Thyroid gland (tissue), 4 donors: ENCODE measurements at regions of chr6 and their contacts with region 1.

Region 1: GRCh38 chr6:7107578-7108195 is at the start of gene RREB1:
- DNase-seq: peak; percentile 69
- H3K4me3 ChIP-seq: peak within 1 kb of the TSS; percentile 42 to 98 (median 97)
- H3K27ac ChIP-seq: peak within 1 kb of the TSS; percentile 97 to 99 (median 97)
- H3K4me1 ChIP-seq: peaks cover 17 to 27% of the 10 kb centered on the region in 2 donors
- H3K27me3 ChIP-seq: no peaks in the 10 kb centered on the region
- CTCF ChIP-seq: no peak
- POLR2A ChIP-seq: peak; percentile 48 to 83
- total RNA-seq, gene RREB1: 48.0 to 91.3 (median 57.1) TPM

Region 2: DNA sequence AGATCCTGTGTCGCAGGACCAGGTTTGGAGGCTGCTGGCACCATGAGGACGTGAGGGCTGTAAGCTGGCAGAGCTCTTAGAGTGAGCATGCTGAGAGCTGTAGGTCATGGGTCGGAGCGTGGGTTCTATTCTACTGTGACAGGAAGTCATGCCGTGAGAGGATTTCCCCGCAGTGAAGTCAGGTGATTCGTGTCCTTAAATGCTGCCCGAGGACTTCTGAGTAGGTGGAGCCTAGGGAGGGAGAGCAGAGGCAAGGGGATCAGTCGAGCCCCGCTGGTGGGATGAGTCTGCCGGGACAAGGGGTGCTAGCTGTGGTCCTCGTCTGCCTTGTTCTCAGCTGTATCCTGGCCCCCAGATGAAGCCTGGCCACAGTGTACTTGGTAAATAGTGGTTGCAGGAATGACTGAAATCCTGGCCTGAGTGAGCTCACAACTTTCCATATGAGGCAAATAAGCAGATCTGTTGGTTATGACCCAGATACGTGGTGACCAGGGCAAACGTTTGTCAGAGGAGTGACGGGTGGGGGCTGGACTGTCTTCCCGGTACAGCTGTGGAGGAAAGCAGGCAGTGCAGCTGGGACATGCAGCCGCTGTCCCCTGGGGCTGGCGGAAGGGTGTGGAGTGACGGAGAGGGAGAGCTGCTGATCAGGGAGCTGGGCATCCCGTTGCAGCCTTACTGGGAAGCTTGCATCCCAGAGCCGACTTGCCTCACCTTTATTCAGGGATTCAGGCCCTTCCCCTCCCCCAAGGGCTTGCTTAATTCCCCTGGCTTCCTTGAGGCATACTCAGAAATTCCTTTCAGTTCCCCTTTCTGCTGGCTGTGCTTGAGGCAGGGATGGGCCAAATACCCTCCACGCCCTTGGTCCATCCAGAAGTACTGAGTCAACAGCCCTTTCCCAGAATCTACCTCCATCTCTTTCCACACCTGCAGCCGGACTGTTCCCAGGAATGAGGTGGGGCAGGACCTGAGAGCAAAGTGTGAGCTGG is 250.9 kb before region 1 on chr6:
- intact Hi-C with region 1: no loop called
- DNase-seq: peak; percentile 22 to 30
- H3K4me3 ChIP-seq: no peak overlapping the region
- H3K27ac ChIP-seq: no peak overlapping the region
- H3K4me1 ChIP-seq: peaks cover 0 to 8% of the 10 kb centered on the region in 2 donors
- H3K27me3 ChIP-seq: no peaks in the 10 kb centered on the region
- CTCF ChIP-seq: no peak
- POLR2A ChIP-seq: no peak

Region 3: GRCh38 chr6:6890400-6890858 is 217.3 kb before region 1 on chr6:
- intact Hi-C with region 1: no loop called
- DNase-seq: peak; percentile 17
- H3K4me3 ChIP-seq: no peak overlapping the region
- H3K27ac ChIP-seq: no peak overlapping the region
- H3K4me1 ChIP-seq: peaks cover 0 to 3% of the 10 kb centered on the region in 2 donors
- H3K27me3 ChIP-seq: no peaks in the 10 kb centered on the region
- CTCF ChIP-seq: no peak
- POLR2A ChIP-seq: no peak

Region 4: DNA sequence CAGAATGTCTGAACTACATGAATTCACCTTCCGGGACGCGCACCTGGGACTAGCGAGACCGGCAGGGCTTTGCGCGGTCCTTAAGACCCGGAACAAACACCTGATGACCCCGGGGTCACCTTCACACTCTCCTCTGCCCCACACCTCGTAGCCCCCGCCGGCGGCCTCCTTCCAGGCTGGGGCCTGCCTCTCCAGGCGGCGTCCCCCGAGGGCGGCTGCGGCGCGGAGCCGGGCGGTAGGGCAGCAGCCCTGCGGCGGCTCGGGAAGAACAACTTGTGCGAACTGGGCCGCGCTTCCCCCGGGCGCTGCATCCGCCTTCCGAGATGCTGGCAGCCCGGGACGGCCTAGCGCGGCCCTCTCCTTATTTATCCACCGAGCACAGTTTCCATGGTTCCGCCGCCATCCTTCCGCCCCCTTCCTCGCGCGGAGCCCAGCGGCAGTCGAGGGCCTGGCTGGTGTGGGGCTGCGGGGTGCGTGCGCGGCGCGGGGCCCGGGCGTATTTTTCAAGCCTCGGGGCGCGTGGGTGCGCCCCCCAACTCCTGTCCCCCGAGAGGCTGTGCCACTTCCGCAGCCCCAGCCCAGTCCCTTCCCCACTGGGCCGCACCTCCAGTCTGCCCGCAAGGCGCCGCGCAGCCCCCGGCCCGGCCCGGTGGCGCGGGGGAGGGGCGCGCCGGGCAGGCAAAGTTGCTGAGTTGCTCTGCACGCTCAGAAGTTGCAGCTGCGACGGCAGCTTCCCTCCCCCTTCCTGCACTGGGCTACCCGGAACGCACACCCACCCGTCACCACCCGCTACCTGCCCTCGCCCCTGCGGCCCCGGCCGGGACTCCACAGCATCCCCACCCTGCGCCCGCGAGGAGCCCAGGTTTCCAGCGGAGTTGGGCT is 56.2 kb before region 1 on chr6:
- intact Hi-C with region 1: loop called (anchors 10 kb)
- DNase-seq: peak; percentile 74 to 78
- H3K4me3 ChIP-seq: peak overlapping the region; percentile 58 to 72 (median 67)
- H3K27ac ChIP-seq: peak overlapping the region; percentile 88 to 97 (median 95)
- H3K4me1 ChIP-seq: peaks cover 0 to 26% of the 10 kb centered on the region in 2 donors
- H3K27me3 ChIP-seq: no peaks in the 10 kb centered on the region
- CTCF ChIP-seq: no peak
- POLR2A ChIP-seq: peak in 1 of 2 donors; percentile 65

Region 5: DNA sequence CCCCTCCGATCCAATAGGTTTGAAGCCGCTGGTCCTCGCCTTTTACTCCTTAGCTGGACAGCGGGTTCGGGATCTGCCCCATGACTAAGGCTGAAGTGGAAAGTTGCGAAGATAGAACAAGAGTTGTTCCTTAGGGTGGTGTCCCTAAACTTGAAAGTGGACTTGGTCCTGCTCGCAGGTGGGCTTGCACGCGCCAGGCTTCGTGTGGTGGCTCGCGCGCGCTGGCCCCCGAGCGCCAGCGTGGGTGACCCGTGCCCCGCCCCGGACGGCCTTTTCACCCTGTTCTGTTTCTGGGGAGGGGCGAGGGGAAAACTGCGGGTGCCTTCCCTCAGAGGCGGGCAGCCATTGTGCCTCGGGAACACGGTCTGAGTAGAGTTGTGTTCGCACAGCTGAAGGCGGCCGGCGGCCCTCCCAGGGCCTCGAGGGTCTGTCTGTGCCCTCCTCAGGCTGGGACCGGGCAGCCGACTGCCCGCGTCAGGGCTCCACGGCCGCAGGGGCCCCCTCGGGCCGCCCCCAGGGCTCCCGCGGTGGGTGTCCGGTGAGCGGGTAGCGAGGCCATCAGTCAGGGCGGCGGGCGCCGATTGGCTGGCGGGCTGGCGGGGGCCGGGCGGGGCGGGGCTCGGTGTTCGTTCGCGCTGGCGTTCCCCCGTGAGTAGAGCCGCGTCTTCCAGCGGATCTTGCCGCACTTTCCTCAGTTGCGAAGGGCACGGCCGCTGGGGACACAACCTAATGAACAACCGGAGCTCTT is 33.1 kb after region 1 on chr6:
- intact Hi-C with region 1: loop called (anchors 5 kb)
- DNase-seq: peak; percentile 87 to 89
- H3K4me3 ChIP-seq: peak overlapping the region in 2 of 3 donors; percentile 13 to 50
- H3K27ac ChIP-seq: peak overlapping the region; percentile 90 to 97 (median 95)
- H3K4me1 ChIP-seq: peaks cover 37 to 68% of the 10 kb centered on the region in 2 donors
- H3K27me3 ChIP-seq: no peaks in the 10 kb centered on the region
- CTCF ChIP-seq: no peak
- POLR2A ChIP-seq: peak in 1 of 2 donors; percentile 89